CD8-positive, alpha-beta memory T cell (primary cell): ENCODE measurements at regions of chr12 and their contacts with region 1.

Region 1: GRCh38 chr12:55973598-55974307 is at the start of gene RAB5B:
- DNase-seq: peak; percentile 94 to 99 (median 98)
- H3K4me3 ChIP-seq: peak within 1 kb of the TSS; percentile 76
- H3K4me3 Mint-ChIP-seq: no peak within 1 kb of the TSS
- H3K27ac ChIP-seq: peak within 1 kb of the TSS; percentile 87
- H3K27ac Mint-ChIP-seq: no peak within 1 kb of the TSS
- H3K4me1 ChIP-seq: peaks cover 36% of the 10 kb centered on the region
- H3K4me1 Mint-ChIP-seq: peaks cover 15 to 27% (median 24%) of the 10 kb centered on the region in 3 donors
- H3K27me3 ChIP-seq: no peaks in the 10 kb centered on the region
- H3K27me3 Mint-ChIP-seq: no peaks in the 10 kb centered on the region
- total RNA-seq, gene RAB5B: 36.6 to 38.3 TPM

Region 2: GRCh38 chr12:55715833-55716581 is 257.7 kb before region 1 on chr12 and contains the start of gene BLOC1S1:
- CTCF ChIA-PET with region 1: no interaction called
- POLR2A ChIA-PET with region 1: interaction called, 10 read pairs
- DNase-seq: peak; percentile 87 to 96 (median 92)
- H3K4me3 ChIP-seq: peak within 1 kb of the TSS; percentile 98
- H3K4me3 Mint-ChIP-seq: peak within 1 kb of the TSS; percentile 82 to 97 (median 93)
- H3K27ac ChIP-seq: peak within 1 kb of the TSS; percentile 79
- H3K27ac Mint-ChIP-seq: peak within 1 kb of the TSS; percentile 89 to 98 (median 95)
- H3K4me1 ChIP-seq: peaks cover 21% of the 10 kb centered on the region
- H3K4me1 Mint-ChIP-seq: peaks cover 31 to 57% (median 33%) of the 10 kb centered on the region in 3 donors
- H3K27me3 ChIP-seq: no peaks in the 10 kb centered on the region
- H3K27me3 Mint-ChIP-seq: peaks cover 0 to 5% of the 10 kb centered on the region in 2 donors
- total RNA-seq, gene BLOC1S1: 97.5 to 110 TPM

Region 3: GRCh38 chr12:55817346-55818139 is 156.2 kb before region 1 on chr12 and contains the starts of genes ORMDL2 and SARNP:
- CTCF ChIA-PET with region 1: interaction called, 5 read pairs
- POLR2A ChIA-PET with region 1: interaction called, 19 read pairs
- DNase-seq: peak; percentile 91 to 99 (median 98)
- H3K4me3 ChIP-seq: peak within 1 kb of the TSS; percentile 94
- H3K4me3 Mint-ChIP-seq: no peak within 1 kb of the TSS
- H3K27ac ChIP-seq: peak within 1 kb of the TSS; percentile 86
- H3K27ac Mint-ChIP-seq: no peak within 1 kb of the TSS
- H3K4me1 ChIP-seq: peaks cover 39% of the 10 kb centered on the region
- H3K4me1 Mint-ChIP-seq: peaks cover 27 to 39% (median 36%) of the 10 kb centered on the region in 3 donors
- H3K27me3 ChIP-seq: no peaks in the 10 kb centered on the region
- H3K27me3 Mint-ChIP-seq: no peaks in the 10 kb centered on the region
- total RNA-seq, gene ORMDL2: 49.0 to 49.7 TPM
- total RNA-seq, gene SARNP: 89.7 to 103 TPM

Region 4: GRCh38 chr12:55926738-55927587 is 46.8 kb before region 1 on chr12:
- CTCF ChIA-PET with region 1: interaction called, 4 read pairs
- POLR2A ChIA-PET with region 1: interaction called, 19 read pairs
- DNase-seq: peak; percentile 82 to 94 (median 86)
- H3K4me3 ChIP-seq: peak overlapping the region; percentile 83
- H3K4me3 Mint-ChIP-seq: peak overlapping the region; percentile 94 to 100 (median 97)
- H3K27ac ChIP-seq: peak overlapping the region; percentile 79
- H3K27ac Mint-ChIP-seq: peak overlapping the region; percentile 91 to 99 (median 96)
- H3K4me1 ChIP-seq: peaks cover 46% of the 10 kb centered on the region
- H3K4me1 Mint-ChIP-seq: peaks cover 55 to 61% (median 58%) of the 10 kb centered on the region in 3 donors
- H3K27me3 ChIP-seq: no peaks in the 10 kb centered on the region
- H3K27me3 Mint-ChIP-seq: peaks cover 0 to 6% of the 10 kb centered on the region in 2 donors

Region 5: GRCh38 chr12:55996715-55997534 is 23.2 kb after region 1 on chr12 and contains the start of gene SUOX:
- CTCF ChIA-PET with region 1: interaction called, 21 read pairs
- POLR2A ChIA-PET with region 1: no interaction called
- DNase-seq: no peak
- H3K4me3 ChIP-seq: peak within 1 kb of the TSS; percentile 17
- H3K4me3 Mint-ChIP-seq: peak within 1 kb of the TSS in 3 of 7 donors; percentile 37 to 69 (median 44)
- H3K27ac ChIP-seq: peak within 1 kb of the TSS; percentile 68
- H3K27ac Mint-ChIP-seq: peak within 1 kb of the TSS in 5 of 8 donors; percentile 29 to 82 (median 58)
- H3K4me1 ChIP-seq: peaks cover 5% of the 10 kb centered on the region
- H3K4me1 Mint-ChIP-seq: peaks cover 11 to 14% (median 13%) of the 10 kb centered on the region in 3 donors
- H3K27me3 ChIP-seq: no peaks in the 10 kb centered on the region
- H3K27me3 Mint-ChIP-seq: peaks cover 0 to 5% of the 10 kb centered on the region in 2 donors
- total RNA-seq, gene SUOX: 2.3 to 2.5 TPM

Region 6: DNA sequence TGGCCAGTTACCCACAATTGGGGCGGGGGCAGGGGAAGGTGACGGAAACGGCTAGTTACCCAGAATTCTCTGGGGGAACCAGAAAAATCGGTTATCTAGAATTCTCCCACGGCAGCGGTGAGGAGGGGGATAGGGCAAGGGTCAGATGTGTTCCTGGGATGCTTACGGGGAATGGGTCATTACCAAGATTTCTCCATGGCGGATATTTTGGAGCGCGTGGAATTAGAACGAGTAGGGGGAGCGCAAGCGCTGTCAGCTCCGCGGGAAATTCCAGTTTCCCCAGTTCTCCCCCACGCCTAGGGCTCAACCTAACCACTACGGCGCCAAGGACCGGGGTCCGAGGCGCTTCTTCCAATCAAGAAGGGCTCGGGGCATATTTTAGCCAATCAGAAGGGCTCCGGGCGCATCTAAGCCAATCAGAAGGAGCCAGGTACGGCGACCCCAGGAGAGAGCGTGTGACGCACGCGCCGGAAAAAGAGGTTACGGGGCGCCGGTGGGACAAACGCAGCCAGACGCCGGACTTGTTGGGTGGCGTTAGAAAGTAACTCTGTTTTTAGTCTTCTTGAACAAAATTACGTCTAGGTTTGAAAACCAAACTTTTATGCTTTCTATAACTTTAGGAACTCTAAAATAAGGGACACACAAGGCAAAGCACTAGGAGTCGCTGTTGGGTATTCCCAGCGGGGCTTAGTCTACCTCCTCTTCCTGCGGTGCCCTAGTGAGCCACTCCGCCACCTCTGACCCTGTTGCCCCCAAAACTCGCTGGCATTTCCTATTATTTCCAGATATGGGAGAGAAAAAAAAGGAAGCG is 360.1 kb after region 1 on chr12 and contains the start of gene PAN2:
- CTCF ChIA-PET with region 1: no interaction called
- POLR2A ChIA-PET with region 1: interaction called, 12 read pairs
- DNase-seq: peak; percentile 88 to 95 (median 94)
- H3K4me3 ChIP-seq: peak within 1 kb of the TSS; percentile 94
- H3K4me3 Mint-ChIP-seq: peak within 1 kb of the TSS; percentile 96 to 99 (median 97)
- H3K27ac ChIP-seq: peak within 1 kb of the TSS; percentile 99
- H3K27ac Mint-ChIP-seq: peak within 1 kb of the TSS; percentile 100
- H3K4me1 ChIP-seq: peaks cover 30% of the 10 kb centered on the region
- H3K4me1 Mint-ChIP-seq: peaks cover 30 to 53% (median 49%) of the 10 kb centered on the region in 3 donors
- H3K27me3 ChIP-seq: no peaks in the 10 kb centered on the region
- H3K27me3 Mint-ChIP-seq: peaks cover 0 to 5% of the 10 kb centered on the region in 2 donors
- total RNA-seq, gene PAN2: 36.6 to 40.4 TPM